ENCODE measurements at regions of chr4 and their contacts with region 1.

Region 1: DNA sequence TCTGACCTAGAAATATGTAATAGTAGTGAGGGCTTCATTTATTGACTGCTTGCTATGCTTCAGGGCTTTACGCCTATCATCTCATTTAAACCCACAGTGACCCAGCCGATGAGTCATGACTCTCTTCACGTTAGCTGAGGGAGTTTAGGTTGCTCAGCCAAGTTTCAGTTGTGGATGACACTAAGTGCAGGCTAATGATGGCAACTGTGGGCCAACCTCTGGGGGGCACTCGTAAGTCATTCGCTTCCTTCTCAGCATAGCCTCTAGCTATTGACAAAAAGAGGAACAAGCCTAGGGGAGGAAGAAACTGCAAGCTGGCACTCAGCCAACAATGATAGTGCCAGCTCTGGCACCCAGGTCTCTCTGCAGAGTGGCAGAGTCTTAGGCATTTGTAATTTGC is 325.0 kb downstream of the ARHGAP10 start:
- DNase-seq: peak; percentile 42 to 52
- ATAC-seq: peak; percentile 27 to 73 (median 52)
- H3K4me3 ChIP-seq: no peak overlapping the region
- H3K27ac ChIP-seq: peak overlapping the region in 6 of 10 donors; percentile 18 to 79 (median 47)
- H3K4me1 ChIP-seq: peaks cover 0 to 97% (median 69%) of the 10 kb centered on the region in 9 donors
- H3K27me3 ChIP-seq: no peaks in the 10 kb centered on the region
- CTCF ChIP-seq: peak in 7 of 9 donors; percentile 20 to 67 (median 36)

Region 2: DNA sequence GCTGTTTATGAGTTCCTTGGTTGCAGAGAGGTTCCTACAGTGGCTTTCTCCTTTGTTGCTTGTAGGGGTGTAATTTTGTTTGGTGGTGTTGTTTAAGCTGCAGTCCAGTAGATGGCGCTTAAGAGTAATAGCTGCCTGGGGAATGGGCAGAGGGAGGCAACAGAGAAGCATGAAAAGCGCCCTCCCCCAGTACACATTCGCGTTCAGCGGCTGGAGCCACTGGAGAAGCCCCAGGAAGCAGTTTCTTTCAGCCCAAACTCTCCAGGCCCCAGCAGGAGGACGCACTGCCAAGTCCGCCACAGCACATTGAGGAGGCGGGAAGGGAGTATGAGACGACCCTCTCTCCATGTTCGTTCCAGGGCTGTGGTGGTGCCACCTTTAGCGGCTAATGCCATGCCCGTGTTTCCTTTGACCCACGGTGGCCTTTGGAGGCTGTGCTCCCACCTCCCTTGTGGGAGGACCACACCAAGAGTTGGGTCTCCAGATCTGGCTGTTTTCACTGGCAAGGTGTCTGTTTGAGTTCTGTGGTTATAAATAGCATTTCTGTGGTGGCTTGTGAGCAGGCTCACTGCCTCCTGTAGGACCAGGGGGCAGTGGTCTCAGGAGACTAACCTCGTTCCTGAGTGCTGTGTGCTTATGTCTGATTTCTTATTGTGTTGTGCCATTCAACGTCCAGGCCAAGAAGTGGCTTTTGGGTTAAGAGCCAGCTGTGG is 72.6 kb before region 1 on chr4:
- intact Hi-C with region 1: loop called in 2 of 10 experiments (anchors 5 to 10 kb)
- DNase-seq: peak in 1 of 2 donors; percentile 27
- ATAC-seq: peak; percentile 16 to 84 (median 70)
- H3K4me3 ChIP-seq: no peak overlapping the region
- H3K27ac ChIP-seq: peak overlapping the region in 5 of 10 donors; percentile 26 to 58 (median 38)
- H3K4me1 ChIP-seq: peaks cover 0 to 52% (median 25%) of the 10 kb centered on the region in 9 donors
- H3K27me3 ChIP-seq: no peaks in the 10 kb centered on the region
- CTCF ChIP-seq: peak; percentile 20 to 69 (median 58)

Region 3: GRCh38 chr4:148203056-148203898 is 146.4 kb after region 1 on chr4:
- intact Hi-C with region 1: loop called in 1 of 10 experiments (anchors 10 kb)
- DNase-seq: peak in 1 of 2 donors; percentile 56
- ATAC-seq: peak; percentile 80 to 96 (median 95)
- H3K4me3 ChIP-seq: peak overlapping the region in 5 of 10 donors; percentile 4 to 27 (median 18)
- H3K27ac ChIP-seq: peak overlapping the region in 9 of 10 donors; percentile 4 to 86 (median 73)
- H3K4me1 ChIP-seq: peaks cover 7 to 50% (median 30%) of the 10 kb centered on the region in 9 donors
- H3K27me3 ChIP-seq: no peaks in the 10 kb centered on the region
- CTCF ChIP-seq: no peak

Region 4: DNA sequence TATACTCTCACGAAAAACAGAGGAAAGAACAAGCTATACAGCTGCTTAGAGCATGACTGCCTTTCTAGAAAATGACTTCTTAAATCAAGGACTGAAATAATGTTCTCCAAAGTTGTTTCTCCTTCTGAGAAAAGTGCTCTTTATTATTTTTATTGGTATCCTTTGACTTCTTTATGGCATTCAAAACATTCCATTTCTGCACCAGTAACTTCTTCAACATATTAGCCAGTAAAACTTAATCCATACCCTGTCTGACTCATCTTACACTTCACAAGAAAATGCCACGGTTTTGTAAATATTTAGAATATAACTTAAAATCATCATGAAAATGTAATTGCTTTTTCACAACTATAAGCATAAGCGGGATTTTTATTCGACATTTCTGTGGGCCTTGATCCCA is 205.0 kb after region 1 on chr4:
- intact Hi-C with region 1: loop called in 1 of 10 experiments (anchors 10 kb)
- DNase-seq: no peak
- ATAC-seq: no peak
- H3K4me3 ChIP-seq: no peak overlapping the region
- H3K27ac ChIP-seq: no peak overlapping the region
- H3K4me1 ChIP-seq: peaks cover 0 to 14% (median 4%) of the 10 kb centered on the region in 9 donors
- H3K27me3 ChIP-seq: no peaks in the 10 kb centered on the region
- CTCF ChIP-seq: no peak

Region 5: GRCh38 chr4:148300877-148301276 is 244.0 kb after region 1 on chr4:
- intact Hi-C with region 1: no loop called
- DNase-seq: no peak
- ATAC-seq: no peak
- H3K4me3 ChIP-seq: no peak overlapping the region
- H3K27ac ChIP-seq: no peak overlapping the region
- H3K4me1 ChIP-seq: peaks cover 0 to 12% (median 2%) of the 10 kb centered on the region in 9 donors
- H3K27me3 ChIP-seq: no peaks in the 10 kb centered on the region
- CTCF ChIP-seq: no peak

Measured in heart right ventricle (tissue), 16 donors.